MCF 10A (cell line): ENCODE measurements at regions of chr12 and their contacts with region 1.

Region 1: GRCh38 chr12:54359033-54359761 is 5.1 kb downstream of the GPR84 start:
- DNase-seq: peak; percentile 99
- H3K4me3 Mint-ChIP-seq: no peak overlapping the region
- H3K27ac Mint-ChIP-seq: no peak overlapping the region
- H3K4me1 Mint-ChIP-seq: peaks cover 23% of the 10 kb centered on the region
- H3K27me3 Mint-ChIP-seq: no peaks in the 10 kb centered on the region
- CTCF ChIP-seq: no peak

Region 2: GRCh38 chr12:54214553-54215406 is 144.4 kb before region 1 on chr12:
- CTCF ChIA-PET with region 1: interaction called, 40 read pairs
- POLR2A ChIA-PET with region 1: interaction called, 4 read pairs
- intact Hi-C with region 1: no loop called
- DNase-seq: peak; percentile 93
- H3K4me3 Mint-ChIP-seq: peak overlapping the region; percentile 26
- H3K27ac Mint-ChIP-seq: no peak overlapping the region
- H3K4me1 Mint-ChIP-seq: peaks cover 12% of the 10 kb centered on the region
- H3K27me3 Mint-ChIP-seq: no peaks in the 10 kb centered on the region
- CTCF ChIP-seq: peak; percentile 99

Region 3: GRCh38 chr12:54251667-54252284 is 107.4 kb before region 1 on chr12:
- CTCF ChIA-PET with region 1: interaction called, 19 read pairs
- POLR2A ChIA-PET with region 1: interaction called, 8 read pairs
- intact Hi-C with region 1: no loop called
- DNase-seq: peak; percentile 58
- H3K4me3 Mint-ChIP-seq: no peak overlapping the region
- H3K27ac Mint-ChIP-seq: peak overlapping the region; percentile 69
- H3K4me1 Mint-ChIP-seq: no peaks in the 10 kb centered on the region
- H3K27me3 Mint-ChIP-seq: no peaks in the 10 kb centered on the region
- CTCF ChIP-seq: peak; percentile 68

Region 4: GRCh38 chr12:54285150-54286041 is 73.8 kb before region 1 on chr12:
- CTCF ChIA-PET with region 1: interaction called, 6 read pairs
- POLR2A ChIA-PET with region 1: interaction called, 47 read pairs
- intact Hi-C with region 1: no loop called
- DNase-seq: no peak
- H3K4me3 Mint-ChIP-seq: no peak overlapping the region
- H3K27ac Mint-ChIP-seq: no peak overlapping the region
- H3K4me1 Mint-ChIP-seq: peaks cover 38% of the 10 kb centered on the region
- H3K27me3 Mint-ChIP-seq: no peaks in the 10 kb centered on the region
- CTCF ChIP-seq: peak; percentile 5

Region 5: GRCh38 chr12:54337280-54337842 is 21.8 kb before region 1 on chr12:
- CTCF ChIA-PET with region 1: interaction called, 38 read pairs
- POLR2A ChIA-PET with region 1: interaction called, 13 read pairs
- intact Hi-C with region 1: loop called (anchors 2 kb)
- DNase-seq: no peak
- H3K4me3 Mint-ChIP-seq: no peak overlapping the region
- H3K27ac Mint-ChIP-seq: no peak overlapping the region
- H3K4me1 Mint-ChIP-seq: peaks cover 13% of the 10 kb centered on the region
- H3K27me3 Mint-ChIP-seq: no peaks in the 10 kb centered on the region
- CTCF ChIP-seq: no peak